Psoas muscle (tissue), 8 donors: ENCODE measurements at regions of chr9 and their contacts with region 1.

Region 1: GRCh38 chr9:116860509-116861120 is 173.5 kb downstream of the TRIM32 start:
- DNase-seq: peak; percentile 47 to 70
- ATAC-seq: peak; percentile 78 to 88 (median 82)
- H3K4me3 ChIP-seq: no peak overlapping the region
- H3K27ac ChIP-seq: no peak overlapping the region
- H3K4me1 ChIP-seq: no peaks in the 10 kb centered on the region
- H3K27me3 ChIP-seq: no peaks in the 10 kb centered on the region
- CTCF ChIP-seq: peak; percentile 84

Region 2: DNA sequence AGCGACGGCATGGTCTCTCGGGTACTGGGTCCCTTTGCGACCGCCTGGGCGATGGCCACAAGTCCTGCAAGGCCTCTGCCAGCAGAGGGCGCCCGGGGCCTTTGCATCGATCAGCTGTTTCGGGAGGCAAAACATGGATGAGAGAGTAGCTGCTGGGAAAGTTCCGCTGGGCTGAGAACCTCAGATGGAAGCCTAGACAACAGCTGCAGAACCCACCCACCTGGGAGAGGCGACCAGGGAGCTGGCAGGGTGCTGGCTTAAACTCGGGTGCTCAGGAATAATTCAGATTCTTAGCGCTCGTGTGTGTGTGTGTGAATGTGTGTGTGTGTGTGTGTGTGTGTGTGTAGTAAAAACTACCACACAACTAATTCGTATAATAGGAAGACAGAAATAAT is 123.5 kb before region 1 on chr9:
- intact Hi-C with region 1: loop called (anchors 1 to 5 kb)
- DNase-seq: peak; percentile 75 to 86
- ATAC-seq: peak; percentile 78 to 93 (median 83)
- H3K4me3 ChIP-seq: no peak overlapping the region
- H3K27ac ChIP-seq: no peak overlapping the region
- H3K4me1 ChIP-seq: no peaks in the 10 kb centered on the region
- H3K27me3 ChIP-seq: no peaks in the 10 kb centered on the region
- CTCF ChIP-seq: peak; percentile 80